ENCODE measurements at regions of chr2 and their contacts with region 1.

Region 1: DNA sequence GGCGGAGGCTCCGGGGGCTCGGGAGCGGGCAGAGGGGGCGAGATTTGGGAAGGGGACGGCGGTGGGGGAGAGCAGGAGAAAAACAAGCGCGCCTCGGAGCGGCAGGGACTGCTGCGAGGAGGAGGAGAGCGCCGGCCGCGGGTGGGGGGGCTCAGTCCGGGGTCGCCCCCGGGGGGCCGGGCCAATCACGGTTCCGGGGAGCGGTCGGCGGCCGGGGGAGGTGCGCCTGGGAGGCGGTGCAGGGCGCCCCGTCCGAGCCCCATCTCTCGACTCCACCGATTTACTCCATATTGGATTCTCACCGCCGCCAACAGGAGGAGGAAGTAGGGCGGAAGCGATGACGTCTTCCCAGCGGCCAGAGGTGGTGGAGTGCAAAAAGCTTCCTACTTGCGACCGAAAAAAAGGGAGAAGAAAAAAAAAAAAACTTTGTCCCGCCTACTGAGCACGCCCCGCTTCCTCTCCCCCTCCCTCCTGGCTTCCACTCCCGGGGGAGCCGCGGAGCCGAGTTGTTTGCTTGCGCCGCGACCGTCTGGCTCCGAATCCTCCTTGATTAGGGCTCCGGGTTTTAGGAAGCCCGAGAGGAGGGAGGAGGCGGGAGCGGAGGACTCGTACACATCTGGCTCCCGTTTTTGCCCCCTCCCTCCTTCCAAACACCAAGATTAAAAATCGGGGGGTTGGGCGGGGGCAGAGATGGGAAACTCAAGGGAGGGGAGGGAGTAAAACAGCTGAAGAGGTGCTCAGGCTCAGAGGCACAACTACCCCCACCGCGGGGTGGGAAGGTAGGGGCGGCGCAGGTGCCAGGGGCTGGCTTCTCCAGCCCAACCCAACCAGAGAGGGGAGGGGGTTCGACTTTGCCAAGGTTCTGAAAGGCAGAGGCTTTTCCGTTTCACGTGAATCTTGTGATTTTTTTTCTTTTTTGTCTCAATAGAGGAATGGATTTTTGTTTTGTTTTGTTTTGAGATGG is at the start of gene SPRED2:
- DNase-seq: peak; percentile 90 to 93
- H3K4me3 ChIP-seq: peak within 1 kb of the TSS; percentile 90 to 96 (median 91)
- H3K27ac ChIP-seq: peak within 1 kb of the TSS; percentile 98 to 99
- H3K4me1 ChIP-seq: peaks cover 0 to 3% of the 10 kb centered on the region in 2 donors
- H3K27me3 ChIP-seq: no peaks in the 10 kb centered on the region
- CTCF ChIP-seq: peak in 2 of 3 donors; percentile 12 to 25
- POLR2A ChIP-seq: peak; percentile 48
- total RNA-seq, gene SPRED2: 14.6 to 25.2 (median 25.2) TPM

Region 2: GRCh38 chr2:65300761-65301711 is 131.5 kb before region 1 on chr2:
- intact Hi-C with region 1: loop called (anchors 10 kb)
- DNase-seq: no peak
- H3K4me3 ChIP-seq: peak overlapping the region in 1 of 3 donors; percentile 28
- H3K27ac ChIP-seq: peak overlapping the region; percentile 74 to 91
- H3K4me1 ChIP-seq: peaks cover 10 to 21% of the 10 kb centered on the region in 2 donors
- H3K27me3 ChIP-seq: no peaks in the 10 kb centered on the region
- CTCF ChIP-seq: no peak
- POLR2A ChIP-seq: no peak

Region 3: GRCh38 chr2:65390134-65390533 is 42.4 kb before region 1 on chr2:
- intact Hi-C with region 1: no loop called
- DNase-seq: no peak
- H3K4me3 ChIP-seq: no peak overlapping the region
- H3K27ac ChIP-seq: peak overlapping the region; percentile 31 to 67
- H3K4me1 ChIP-seq: peaks cover 2 to 3% of the 10 kb centered on the region in 2 donors
- H3K27me3 ChIP-seq: no peaks in the 10 kb centered on the region
- CTCF ChIP-seq: no peak
- POLR2A ChIP-seq: no peak

Measured in breast epithelium (tissue), 4 donors.